ENCODE measurements at regions of chr2 and their contacts with region 1.

Region 1: DNA sequence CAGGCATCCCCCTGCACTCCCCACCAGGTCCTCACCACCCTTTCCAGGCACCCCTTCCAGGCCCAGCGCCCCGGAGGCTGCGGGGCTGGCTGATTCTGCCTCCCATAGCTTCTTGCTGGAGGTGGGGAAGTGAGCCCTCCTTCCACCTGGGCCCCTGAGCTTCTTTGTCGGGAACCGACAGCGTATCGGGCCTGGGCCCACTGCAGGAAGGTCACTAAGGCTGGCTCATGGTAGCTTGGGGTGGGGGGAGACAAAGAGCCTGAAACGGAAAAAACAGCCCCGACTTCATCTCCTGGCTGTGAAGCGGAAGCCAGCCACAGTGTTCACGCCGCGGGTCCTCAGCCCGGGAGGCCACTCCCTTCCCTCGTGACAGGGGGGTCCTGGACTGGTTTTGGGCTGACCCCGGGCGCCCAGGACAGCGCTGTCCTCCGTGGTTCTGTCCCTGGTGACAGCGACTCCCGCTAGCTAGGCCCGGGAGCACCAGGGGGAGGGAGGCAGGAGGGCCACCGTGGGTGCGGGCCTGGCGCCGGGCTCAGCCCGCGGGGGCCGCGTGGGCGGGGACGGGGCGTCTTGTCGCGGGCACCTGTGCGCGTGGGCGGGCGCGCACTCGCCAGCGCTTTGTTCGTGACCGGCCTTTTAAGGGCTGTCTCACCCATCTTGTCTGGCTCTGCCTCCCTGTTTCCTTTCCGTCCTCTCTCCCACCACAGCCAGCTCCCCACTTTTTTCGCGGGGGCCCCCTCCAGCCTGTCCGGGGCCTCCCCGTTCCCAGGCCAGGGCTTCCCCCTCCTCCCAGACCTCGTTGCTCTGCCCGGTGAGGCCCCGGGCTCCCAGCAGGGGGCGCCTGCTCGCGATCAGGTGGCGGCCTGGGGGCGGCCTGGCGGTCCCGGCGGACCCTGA is 64.9 kb downstream of the DNMT3A start:
- DNase-seq: peak; percentile 59 to 89 (median 70)
- ATAC-seq: peak; percentile 50
- H3K4me3 ChIP-seq: peak overlapping the region; percentile 53
- H3K4me3 Mint-ChIP-seq: peak overlapping the region; percentile 71 to 83 (median 79)
- H3K27ac ChIP-seq: peak overlapping the region; percentile 92
- H3K27ac Mint-ChIP-seq: peak overlapping the region; percentile 88 to 100 (median 99)
- H3K4me1 ChIP-seq: peaks cover 54 to 82% of the 10 kb centered on the region in 2 donors
- H3K4me1 Mint-ChIP-seq: peaks cover 52 to 89% (median 80%) of the 10 kb centered on the region in 7 donors
- H3K27me3 ChIP-seq: no peaks in the 10 kb centered on the region
- H3K27me3 Mint-ChIP-seq: no peaks in the 10 kb centered on the region

Region 2: DNA sequence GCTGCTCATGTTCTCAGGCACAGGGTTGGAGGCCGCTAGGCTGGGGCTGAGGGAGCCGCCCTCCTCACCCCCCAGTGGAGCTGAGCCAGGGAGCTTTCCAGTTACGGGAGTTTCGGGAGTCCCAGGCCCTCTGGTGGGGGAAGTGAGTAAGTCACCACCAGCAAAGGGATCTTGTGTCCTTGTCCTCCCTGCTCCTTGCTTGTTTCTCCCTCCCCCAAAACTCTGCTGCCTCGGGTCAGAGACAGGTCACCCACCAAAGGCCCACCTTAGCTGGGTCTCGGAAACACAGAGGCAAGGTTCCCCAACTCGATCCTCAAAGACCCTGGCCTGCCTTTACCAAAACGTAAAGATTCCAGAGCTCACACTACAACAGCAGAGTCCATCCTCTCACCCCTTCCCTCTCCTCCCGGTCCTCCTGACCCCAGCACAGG is 48.0 kb before region 1 on chr2:
- CTCF ChIA-PET with region 1: interaction called, 4 read pairs
- POLR2A ChIA-PET with region 1: interaction called, 14 read pairs
- intact Hi-C with region 1: loop called in 1 of 2 experiments (anchors 1 kb)
- DNase-seq: peak in 1 of 9 donors; percentile 31
- ATAC-seq: peak; percentile 77
- H3K4me3 ChIP-seq: no peak overlapping the region
- H3K4me3 Mint-ChIP-seq: no peak overlapping the region
- H3K27ac ChIP-seq: no peak overlapping the region
- H3K27ac Mint-ChIP-seq: peak overlapping the region in 2 of 9 donors; percentile 19 to 54
- H3K4me1 ChIP-seq: no peaks in the 10 kb centered on the region
- H3K4me1 Mint-ChIP-seq: peaks cover 0 to 34% (median 13%) of the 10 kb centered on the region in 7 donors
- H3K27me3 ChIP-seq: no peaks in the 10 kb centered on the region
- H3K27me3 Mint-ChIP-seq: no peaks in the 10 kb centered on the region

Region 3: GRCh38 chr2:25294573-25295462 is 18.0 kb after region 1 on chr2:
- CTCF ChIA-PET with region 1: interaction called, 15 read pairs
- POLR2A ChIA-PET with region 1: interaction called, 287 read pairs
- intact Hi-C with region 1: loop called (anchors 1 kb)
- DNase-seq: peak; percentile 51 to 79 (median 73)
- ATAC-seq: peak; percentile 89
- H3K4me3 ChIP-seq: peak overlapping the region; percentile 46
- H3K4me3 Mint-ChIP-seq: peak overlapping the region; percentile 72 to 85 (median 82)
- H3K27ac ChIP-seq: peak overlapping the region; percentile 81
- H3K27ac Mint-ChIP-seq: peak overlapping the region; percentile 90 to 99 (median 97)
- H3K4me1 ChIP-seq: peaks cover 31 to 61% of the 10 kb centered on the region in 2 donors
- H3K4me1 Mint-ChIP-seq: peaks cover 39 to 75% (median 55%) of the 10 kb centered on the region in 7 donors
- H3K27me3 ChIP-seq: no peaks in the 10 kb centered on the region
- H3K27me3 Mint-ChIP-seq: no peaks in the 10 kb centered on the region

Region 4: GRCh38 chr2:25337276-25337675 is 60.5 kb after region 1 on chr2:
- CTCF ChIA-PET with region 1: interaction called, 4 read pairs
- POLR2A ChIA-PET with region 1: interaction called, 25 read pairs
- intact Hi-C with region 1: loop called in 1 of 2 experiments (anchors 1 kb)
- DNase-seq: peak in 2 of 9 donors; percentile 35 to 46
- ATAC-seq: no peak
- H3K4me3 ChIP-seq: no peak overlapping the region
- H3K4me3 Mint-ChIP-seq: peak overlapping the region; percentile 21 to 84 (median 66)
- H3K27ac ChIP-seq: peak overlapping the region; percentile 69
- H3K27ac Mint-ChIP-seq: peak overlapping the region; percentile 62 to 96 (median 76)
- H3K4me1 ChIP-seq: peaks cover 13 to 67% of the 10 kb centered on the region in 2 donors
- H3K4me1 Mint-ChIP-seq: peaks cover 54 to 76% (median 70%) of the 10 kb centered on the region in 7 donors
- H3K27me3 ChIP-seq: no peaks in the 10 kb centered on the region
- H3K27me3 Mint-ChIP-seq: no peaks in the 10 kb centered on the region

Region 5: DNA sequence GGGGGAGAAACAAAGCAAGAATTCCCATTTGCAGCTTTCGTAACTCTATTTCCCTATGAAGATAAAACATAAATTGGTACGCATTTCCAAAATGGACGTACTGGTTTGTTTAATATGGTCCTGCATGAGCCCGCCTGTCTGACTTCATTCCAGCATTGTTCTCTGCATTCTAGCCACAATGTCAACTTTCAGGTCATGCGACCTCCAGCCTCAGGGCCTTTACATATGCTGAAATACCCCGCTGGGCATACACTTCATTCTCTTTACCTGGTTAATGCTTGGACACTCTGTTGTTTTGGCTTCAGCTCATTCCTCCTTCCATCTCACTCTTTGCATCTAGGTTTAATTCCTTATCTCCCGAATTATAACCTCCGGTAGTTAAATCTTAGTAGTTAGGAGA is 168.6 kb after region 1 on chr2:
- CTCF ChIA-PET with region 1: no interaction called
- POLR2A ChIA-PET with region 1: no interaction called
- intact Hi-C with region 1: no loop called
- DNase-seq: no peak
- ATAC-seq: no peak
- H3K4me3 ChIP-seq: no peak overlapping the region
- H3K4me3 Mint-ChIP-seq: no peak overlapping the region
- H3K27ac ChIP-seq: no peak overlapping the region
- H3K27ac Mint-ChIP-seq: peak overlapping the region in 1 of 9 donors; percentile 31
- H3K4me1 ChIP-seq: no peaks in the 10 kb centered on the region
- H3K4me1 Mint-ChIP-seq: peaks cover 0 to 2% (median 0%) of the 10 kb centered on the region in 7 donors
- H3K27me3 ChIP-seq: no peaks in the 10 kb centered on the region
- H3K27me3 Mint-ChIP-seq: no peaks in the 10 kb centered on the region

Region 6: GRCh38 chr2:25521665-25522387 is 245.0 kb after region 1 on chr2:
- CTCF ChIA-PET with region 1: no interaction called
- POLR2A ChIA-PET with region 1: interaction called, 5 read pairs
- intact Hi-C with region 1: loop called in 1 of 2 experiments (anchors 5 kb)
- DNase-seq: peak in 7 of 9 donors; percentile 59 to 82 (median 72)
- ATAC-seq: peak; percentile 99
- H3K4me3 ChIP-seq: no peak overlapping the region
- H3K4me3 Mint-ChIP-seq: peak overlapping the region in 8 of 10 donors; percentile 4 to 77 (median 42)
- H3K27ac ChIP-seq: no peak overlapping the region
- H3K27ac Mint-ChIP-seq: peak overlapping the region in 8 of 9 donors; percentile 38 to 88 (median 66)
- H3K4me1 ChIP-seq: peaks cover 4 to 5% of the 10 kb centered on the region in 2 donors
- H3K4me1 Mint-ChIP-seq: peaks cover 0 to 25% (median 8%) of the 10 kb centered on the region in 7 donors
- H3K27me3 ChIP-seq: no peaks in the 10 kb centered on the region
- H3K27me3 Mint-ChIP-seq: no peaks in the 10 kb centered on the region